Activated B cell treated with CpG ODN at 0.5 μM for 24 hours (primary cell): ENCODE measurements at regions of chr1 and their contacts with region 1.

Region 1: GRCh38 chr1:31923901-31924535 is 14.2 kb downstream of the PTP4A2 start:
- DNase-seq: no peak
- ATAC-seq: no peak
- H3K4me3 Mint-ChIP-seq: no peak overlapping the region
- H3K27ac Mint-ChIP-seq: peak overlapping the region; percentile 30
- H3K4me1 Mint-ChIP-seq: peaks cover 82% of the 10 kb centered on the region
- H3K27me3 Mint-ChIP-seq: no peaks in the 10 kb centered on the region
- CTCF ChIP-seq: no peak

Region 2: DNA sequence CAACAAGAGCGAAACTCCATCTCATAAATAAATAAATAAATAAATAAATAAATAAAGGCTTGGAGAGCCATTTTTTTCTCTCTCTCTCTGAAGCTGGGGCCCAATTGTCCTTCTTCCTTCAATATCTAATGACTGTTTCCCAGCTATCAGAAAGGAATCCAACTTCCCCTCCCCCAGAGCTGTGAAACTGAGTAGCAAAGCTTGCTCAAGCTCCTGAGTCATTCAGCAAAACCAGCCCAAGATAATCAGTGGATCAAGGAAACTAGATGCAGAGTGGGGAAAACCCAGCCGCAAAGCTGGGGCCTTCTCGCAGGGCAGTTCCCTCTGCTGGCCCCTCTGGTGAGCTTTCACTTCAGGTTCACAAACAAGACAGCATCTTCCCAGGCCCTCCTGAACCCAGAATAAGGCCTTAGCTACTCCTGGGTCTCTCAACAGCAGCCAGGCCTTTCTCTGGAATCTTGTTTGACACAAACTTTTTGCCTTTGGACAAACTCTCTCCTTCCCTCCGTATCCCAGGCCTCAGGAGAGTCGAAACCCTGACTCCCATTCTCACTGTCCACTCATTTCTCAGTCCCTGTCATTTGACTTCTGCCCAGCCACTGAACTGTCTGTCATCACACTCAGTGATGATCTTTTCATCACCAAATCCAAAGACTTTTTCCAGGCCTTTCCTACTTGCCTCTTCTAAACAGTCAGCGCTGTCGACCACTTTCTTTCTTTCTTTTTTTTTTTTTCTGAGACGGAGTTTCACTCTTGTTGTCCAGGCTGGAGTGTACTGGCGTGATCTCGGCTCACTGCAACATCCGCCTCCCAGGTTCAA is 32.1 kb after region 1 on chr1:
- CTCF ChIA-PET with region 1: no interaction called
- POLR2A ChIA-PET with region 1: interaction called, 5 read pairs
- intact Hi-C with region 1: loop called (anchors 5 kb)
- DNase-seq: peak; percentile 56
- ATAC-seq: peak; percentile 97
- H3K4me3 Mint-ChIP-seq: peak overlapping the region; percentile 72
- H3K27ac Mint-ChIP-seq: peak overlapping the region; percentile 93
- H3K4me1 Mint-ChIP-seq: peaks cover 41% of the 10 kb centered on the region
- H3K27me3 Mint-ChIP-seq: no peaks in the 10 kb centered on the region
- CTCF ChIP-seq: no peak